CD8-positive, alpha-beta memory T cell (primary cell): ENCODE measurements at regions of chr12 and their contacts with region 1.

Region 1: GRCh38 chr12:47797441-47797840 is 22.3 kb downstream of the HDAC7 start:
- DNase-seq: peak in 4 of 5 donors; percentile 16 to 66 (median 54)
- H3K4me3 ChIP-seq: no peak overlapping the region
- H3K4me3 Mint-ChIP-seq: no peak overlapping the region
- H3K27ac ChIP-seq: no peak overlapping the region
- H3K27ac Mint-ChIP-seq: peak overlapping the region in 3 of 8 donors; percentile 28 to 84 (median 61)
- H3K4me1 ChIP-seq: peaks cover 34% of the 10 kb centered on the region
- H3K4me1 Mint-ChIP-seq: peaks cover 17 to 34% (median 29%) of the 10 kb centered on the region in 3 donors
- H3K27me3 ChIP-seq: no peaks in the 10 kb centered on the region
- H3K27me3 Mint-ChIP-seq: no peaks in the 10 kb centered on the region

Region 2: DNA sequence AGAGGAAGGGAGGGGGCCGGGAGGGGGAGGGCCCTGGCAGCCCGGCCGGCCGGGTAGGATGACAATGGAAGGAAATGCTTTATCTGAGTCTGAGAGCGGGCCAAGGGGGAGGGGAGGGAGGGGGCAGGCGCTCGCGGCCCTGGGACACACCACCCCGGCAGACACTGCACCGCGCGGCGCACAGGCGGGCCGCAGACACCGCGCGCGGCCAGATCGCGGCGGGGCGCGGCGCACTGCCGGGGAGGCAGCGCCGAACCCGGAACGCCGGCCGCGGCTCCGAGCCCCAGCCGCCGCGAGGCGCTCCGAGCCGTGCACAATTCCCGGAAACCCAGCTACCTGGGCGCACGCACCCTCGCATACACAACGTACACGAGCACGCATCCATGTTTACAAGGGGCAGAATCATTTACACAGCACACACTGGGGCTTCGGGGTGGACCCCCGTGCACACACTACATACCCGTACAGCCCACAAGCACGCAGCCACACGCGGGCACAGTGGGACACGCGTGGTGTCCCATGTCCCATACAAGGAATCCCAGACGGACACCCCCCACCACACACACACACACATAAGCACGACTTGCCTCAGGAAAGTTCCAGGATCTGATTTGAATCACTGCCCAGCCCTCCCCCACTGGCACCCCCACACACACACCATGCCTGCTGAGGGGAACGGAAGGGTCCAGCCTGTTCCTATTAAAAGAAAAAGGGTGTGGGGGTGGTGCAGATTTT is 22.6 kb after region 1 on chr12 and contains the start of gene HDAC7:
- CTCF ChIA-PET with region 1: interaction called, 11 read pairs
- POLR2A ChIA-PET with region 1: interaction called, 3 read pairs
- DNase-seq: peak; percentile 56 to 82 (median 66)
- H3K4me3 ChIP-seq: peak within 1 kb of the TSS; percentile 83
- H3K4me3 Mint-ChIP-seq: peak within 1 kb of the TSS; percentile 90 to 97 (median 93)
- H3K27ac ChIP-seq: peak within 1 kb of the TSS; percentile 71
- H3K27ac Mint-ChIP-seq: peak within 1 kb of the TSS; percentile 94 to 99 (median 97)
- H3K4me1 ChIP-seq: peaks cover 79% of the 10 kb centered on the region
- H3K4me1 Mint-ChIP-seq: peaks cover 76 to 88% (median 88%) of the 10 kb centered on the region in 3 donors
- H3K27me3 ChIP-seq: no peaks in the 10 kb centered on the region
- H3K27me3 Mint-ChIP-seq: peaks cover 0 to 1% of the 10 kb centered on the region in 2 donors
- total RNA-seq, gene HDAC7: 206 to 207 TPM

Region 3: GRCh38 chr12:47963340-47964040 is 166.0 kb after region 1 on chr12 and contains the start of gene TMEM106C:
- CTCF ChIA-PET with region 1: no interaction called
- POLR2A ChIA-PET with region 1: no interaction called
- DNase-seq: peak; percentile 88 to 94 (median 91)
- H3K4me3 ChIP-seq: peak within 1 kb of the TSS; percentile 99
- H3K4me3 Mint-ChIP-seq: peak within 1 kb of the TSS; percentile 94 to 99 (median 98)
- H3K27ac ChIP-seq: peak within 1 kb of the TSS; percentile 61
- H3K27ac Mint-ChIP-seq: peak within 1 kb of the TSS; percentile 28 to 99 (median 92)
- H3K4me1 ChIP-seq: peaks cover 15% of the 10 kb centered on the region
- H3K4me1 Mint-ChIP-seq: peaks cover 26 to 37% (median 32%) of the 10 kb centered on the region in 3 donors
- H3K27me3 ChIP-seq: no peaks in the 10 kb centered on the region
- H3K27me3 Mint-ChIP-seq: peaks cover 10 to 18% of the 10 kb centered on the region in 2 donors
- total RNA-seq, gene TMEM106C: 178 to 186 TPM